Transverse colon (tissue), 4 donors: ENCODE measurements at regions of chr6 and their contacts with region 1.

Region 1: GRCh38 chr6:30515932-30516753 is 26.8 kb downstream of the HLA-E start:
- DNase-seq: peak; percentile 93
- H3K4me3 ChIP-seq: peak overlapping the region; percentile 5 to 59 (median 32)
- H3K27ac ChIP-seq: peak overlapping the region; percentile 81 to 98 (median 94)
- H3K4me1 ChIP-seq: peaks cover 4 to 26% (median 14%) of the 10 kb centered on the region in 4 donors
- H3K27me3 ChIP-seq: no peaks in the 10 kb centered on the region
- CTCF ChIP-seq: no peak
- EP300 ChIP-seq: peak; percentile 15
- POLR2A ChIP-seq: peak; percentile 76

Region 2: DNA sequence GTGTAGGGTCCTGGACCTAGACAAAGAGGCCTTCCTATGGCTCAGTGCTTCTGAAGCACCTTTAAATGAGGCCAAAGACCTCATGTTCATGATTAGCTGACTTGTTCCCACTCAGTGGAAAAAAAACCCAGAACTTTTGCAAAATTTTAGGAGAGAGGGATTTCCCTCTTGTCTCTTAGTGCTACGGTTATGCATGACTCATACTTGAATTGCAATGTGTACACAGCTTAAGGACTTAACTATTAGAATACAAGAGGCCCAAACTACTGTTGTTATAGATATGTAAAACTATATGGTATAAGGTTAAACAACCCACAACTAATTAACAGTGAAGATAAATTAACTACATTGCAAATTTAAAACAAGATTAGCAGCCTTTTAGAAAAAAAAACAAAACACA is 606.2 kb before region 1 on chr6:
- in situ Hi-C with region 1: no loop called
- intact Hi-C with region 1: no loop called
- DNase-seq: no peak
- H3K4me3 ChIP-seq: no peak overlapping the region
- H3K27ac ChIP-seq: no peak overlapping the region
- H3K4me1 ChIP-seq: no peaks in the 10 kb centered on the region
- H3K27me3 ChIP-seq: no peaks in the 10 kb centered on the region
- CTCF ChIP-seq: no peak
- EP300 ChIP-seq: no peak
- POLR2A ChIP-seq: no peak

Region 3: GRCh38 chr6:30272017-30272416 is 244.1 kb before region 1 on chr6:
- in situ Hi-C with region 1: no loop called
- intact Hi-C with region 1: no loop called
- DNase-seq: no peak
- H3K4me3 ChIP-seq: no peak overlapping the region
- H3K27ac ChIP-seq: no peak overlapping the region
- H3K4me1 ChIP-seq: no peaks in the 10 kb centered on the region
- H3K27me3 ChIP-seq: no peaks in the 10 kb centered on the region
- CTCF ChIP-seq: no peak
- EP300 ChIP-seq: no peak
- POLR2A ChIP-seq: no peak

Region 4: GRCh38 chr6:30497714-30498113 is 18.4 kb before region 1 on chr6:
- in situ Hi-C with region 1: no loop called
- intact Hi-C with region 1: loop called (anchors 1 kb)
- DNase-seq: no peak
- H3K4me3 ChIP-seq: no peak overlapping the region
- H3K27ac ChIP-seq: no peak overlapping the region
- H3K4me1 ChIP-seq: peaks cover 0 to 24% (median 0%) of the 10 kb centered on the region in 4 donors
- H3K27me3 ChIP-seq: no peaks in the 10 kb centered on the region
- CTCF ChIP-seq: no peak
- EP300 ChIP-seq: no peak
- POLR2A ChIP-seq: no peak

Region 5: GRCh38 chr6:32127717-32128592 is 1611.8 kb after region 1 on chr6 and contains the start of gene ATF6B:
- in situ Hi-C with region 1: no loop called
- intact Hi-C with region 1: no loop called
- DNase-seq: peak; percentile 98
- H3K4me3 ChIP-seq: peak within 1 kb of the TSS; percentile 62 to 83 (median 73)
- H3K27ac ChIP-seq: peak within 1 kb of the TSS; percentile 91 to 92 (median 91)
- H3K4me1 ChIP-seq: peaks cover 24 to 31% (median 26%) of the 10 kb centered on the region in 4 donors
- H3K27me3 ChIP-seq: no peaks in the 10 kb centered on the region
- CTCF ChIP-seq: no peak
- EP300 ChIP-seq: no peak
- POLR2A ChIP-seq: peak; percentile 83
- total RNA-seq, gene ATF6B: 59.0 to 139 (median 98.5) TPM